MCF 10A (cell line): ENCODE measurements at regions of chr5 and their contacts with region 1.

Region 1: GRCh38 chr5:1167728-1168709 is 33.4 kb upstream of the SLC6A19 start:
- DNase-seq: peak; percentile 75
- H3K4me3 Mint-ChIP-seq: peak overlapping the region; percentile 50
- H3K27ac Mint-ChIP-seq: no peak overlapping the region
- H3K4me1 Mint-ChIP-seq: peaks cover 8% of the 10 kb centered on the region
- H3K27me3 Mint-ChIP-seq: peaks cover 12% of the 10 kb centered on the region
- CTCF ChIP-seq: peak; percentile 75

Region 2: DNA sequence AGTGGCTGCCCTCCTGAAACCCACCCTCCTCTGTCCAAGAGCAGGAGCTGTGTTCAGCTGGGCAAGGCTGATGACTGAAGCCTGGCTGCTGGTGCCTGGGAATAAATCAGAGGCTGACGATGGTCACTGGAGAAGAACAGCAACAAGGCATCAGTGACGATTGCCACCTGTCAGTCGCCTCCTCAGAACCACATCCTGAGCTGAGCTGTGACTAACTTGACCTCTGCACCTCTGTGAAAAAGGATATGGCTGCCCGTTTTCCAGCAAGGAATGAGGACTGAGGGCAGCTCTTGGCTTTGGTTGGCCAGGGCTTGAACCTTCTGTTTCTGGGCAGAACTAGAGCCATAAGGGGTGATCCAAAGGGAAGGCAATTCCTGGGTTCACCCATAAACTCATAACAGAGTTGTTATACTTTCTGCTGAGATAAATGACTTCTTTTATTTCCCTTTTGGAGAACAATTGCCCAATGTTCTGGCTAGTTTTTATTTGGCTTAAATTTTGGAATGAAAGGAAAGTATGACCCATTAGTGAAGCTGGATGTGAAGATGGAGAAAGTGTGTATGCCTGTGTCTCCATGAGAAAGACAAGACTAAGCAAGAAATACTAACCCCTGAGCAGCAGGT is 235.3 kb before region 1 on chr5:
- CTCF ChIA-PET with region 1: interaction called, 16 read pairs
- POLR2A ChIA-PET with region 1: no interaction called
- intact Hi-C with region 1: no loop called
- DNase-seq: no peak
- H3K4me3 Mint-ChIP-seq: no peak overlapping the region
- H3K27ac Mint-ChIP-seq: no peak overlapping the region
- H3K4me1 Mint-ChIP-seq: no peaks in the 10 kb centered on the region
- H3K27me3 Mint-ChIP-seq: peaks cover 45% of the 10 kb centered on the region
- CTCF ChIP-seq: no peak

Region 3: GRCh38 chr5:1004461-1005248 is 163.4 kb before region 1 on chr5:
- CTCF ChIA-PET with region 1: no interaction called
- POLR2A ChIA-PET with region 1: no interaction called
- intact Hi-C with region 1: loop called (anchors 5 kb)
- DNase-seq: no peak
- H3K4me3 Mint-ChIP-seq: peak overlapping the region; percentile 64
- H3K27ac Mint-ChIP-seq: no peak overlapping the region
- H3K4me1 Mint-ChIP-seq: peaks cover 19% of the 10 kb centered on the region
- H3K27me3 Mint-ChIP-seq: peaks cover 46% of the 10 kb centered on the region
- CTCF ChIP-seq: peak; percentile 17

Region 4: GRCh38 chr5:1344975-1345838 is 177.2 kb after region 1 on chr5 and contains the start of gene CLPTM1L:
- CTCF ChIA-PET with region 1: interaction called, 4 read pairs
- POLR2A ChIA-PET with region 1: no interaction called
- intact Hi-C with region 1: loop called (anchors 10 kb)
- DNase-seq: peak; percentile 81
- H3K4me3 Mint-ChIP-seq: peak within 1 kb of the TSS; percentile 83
- H3K27ac Mint-ChIP-seq: peak within 1 kb of the TSS; percentile 80
- H3K4me1 Mint-ChIP-seq: peaks cover 16% of the 10 kb centered on the region
- H3K27me3 Mint-ChIP-seq: no peaks in the 10 kb centered on the region
- CTCF ChIP-seq: no peak
- total RNA-seq, gene CLPTM1L: 116 and 128 TPM in 2 replicates